Breast epithelium (tissue), 4 donors: ENCODE measurements at regions of chr12 and their contacts with region 1.

Region 1: DNA sequence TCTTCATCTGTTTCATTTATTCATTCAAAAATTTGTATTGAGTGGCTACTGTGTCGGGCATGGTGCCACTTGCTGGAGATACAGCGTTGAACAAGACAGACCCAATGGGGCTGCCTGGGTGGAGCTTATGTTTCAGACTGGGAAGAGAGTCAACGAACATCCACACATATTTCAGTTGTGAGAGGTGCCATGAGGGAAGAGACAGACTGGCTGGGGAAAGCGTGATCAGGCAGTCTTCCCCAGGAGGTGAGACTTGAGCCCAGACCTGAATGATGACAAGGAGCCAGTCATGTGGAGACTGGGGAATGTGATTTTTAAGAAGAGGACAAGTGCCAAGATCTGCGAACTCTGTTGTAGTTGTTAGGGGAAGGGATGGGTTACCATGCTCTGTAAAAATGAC is 12.2 kb downstream of the BICD1 start:
- DNase-seq: no peak
- H3K4me3 ChIP-seq: no peak overlapping the region
- H3K27ac ChIP-seq: no peak overlapping the region
- H3K4me1 ChIP-seq: no peaks in the 10 kb centered on the region
- H3K27me3 ChIP-seq: no peaks in the 10 kb centered on the region
- CTCF ChIP-seq: no peak
- POLR2A ChIP-seq: no peak

Region 2: DNA sequence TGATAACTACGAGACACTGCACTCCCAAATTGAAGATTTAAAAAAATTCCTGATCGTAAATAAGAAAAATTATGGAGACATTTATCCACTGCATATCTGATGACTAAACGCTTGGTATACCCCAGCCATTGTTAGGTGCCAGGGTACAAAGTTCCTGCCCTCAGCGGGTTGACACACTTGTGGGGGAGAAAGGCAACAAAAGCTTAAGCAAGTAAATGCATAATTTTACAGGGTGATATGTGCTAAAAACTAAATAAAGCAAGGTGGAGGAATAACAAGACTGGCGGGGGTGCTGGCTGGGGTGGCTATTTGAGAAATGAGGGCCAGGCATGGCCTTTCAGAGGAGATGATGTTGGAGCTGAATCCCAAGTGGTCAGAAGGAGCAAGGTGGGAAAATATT is 12.9 kb after region 1 on chr12:
- intact Hi-C with region 1: loop called (anchors 2 kb)
- DNase-seq: no peak
- H3K4me3 ChIP-seq: no peak overlapping the region
- H3K27ac ChIP-seq: no peak overlapping the region
- H3K4me1 ChIP-seq: no peaks in the 10 kb centered on the region
- H3K27me3 ChIP-seq: no peaks in the 10 kb centered on the region
- CTCF ChIP-seq: no peak
- POLR2A ChIP-seq: no peak